ENCODE measurements at regions of chr17 and their contacts with region 1.

Region 1: GRCh38 chr17:64773836-64774761 is 112.0 kb upstream of the SMURF2 start:
- H3K4me3 ChIP-seq: peak overlapping the region; percentile 1
- H3K27ac ChIP-seq: no peak overlapping the region
- H3K4me1 ChIP-seq: no peaks in the 10 kb centered on the region; the same call in 1 of the 2 replicates
- CTCF ChIP-seq: peak; percentile 43; the same call in 1 of the 2 replicates

Region 2: GRCh38 chr17:64306850-64307463 is 467.1 kb before region 1 on chr17:
- CTCF ChIA-PET with region 1: interaction called, 10 read pairs
- POLR2A ChIA-PET with region 1: no interaction called
- H3K4me3 ChIP-seq: no peak overlapping the region
- H3K27ac ChIP-seq: no peak overlapping the region
- H3K4me1 ChIP-seq: no peaks in the 10 kb centered on the region
- CTCF ChIP-seq: no peak

Region 3: GRCh38 chr17:64694207-64694606 is 79.9 kb before region 1 on chr17:
- CTCF ChIA-PET with region 1: no interaction called
- POLR2A ChIA-PET with region 1: no interaction called
- H3K4me3 ChIP-seq: no peak overlapping the region
- H3K27ac ChIP-seq: no peak overlapping the region
- H3K4me1 ChIP-seq: no peaks in the 10 kb centered on the region
- CTCF ChIP-seq: no peak

Region 4: GRCh38 chr17:64750891-64751677 is 23.0 kb before region 1 on chr17:
- CTCF ChIA-PET with region 1: no interaction called
- POLR2A ChIA-PET with region 1: interaction called, 12 read pairs
- H3K4me3 ChIP-seq: no peak overlapping the region
- H3K27ac ChIP-seq: no peak overlapping the region
- H3K4me1 ChIP-seq: no peaks in the 10 kb centered on the region
- CTCF ChIP-seq: no peak

Measured in HEK293 (cell line).